ENCODE measurements at regions of chr6 and their contacts with region 1.

Region 1: DNA sequence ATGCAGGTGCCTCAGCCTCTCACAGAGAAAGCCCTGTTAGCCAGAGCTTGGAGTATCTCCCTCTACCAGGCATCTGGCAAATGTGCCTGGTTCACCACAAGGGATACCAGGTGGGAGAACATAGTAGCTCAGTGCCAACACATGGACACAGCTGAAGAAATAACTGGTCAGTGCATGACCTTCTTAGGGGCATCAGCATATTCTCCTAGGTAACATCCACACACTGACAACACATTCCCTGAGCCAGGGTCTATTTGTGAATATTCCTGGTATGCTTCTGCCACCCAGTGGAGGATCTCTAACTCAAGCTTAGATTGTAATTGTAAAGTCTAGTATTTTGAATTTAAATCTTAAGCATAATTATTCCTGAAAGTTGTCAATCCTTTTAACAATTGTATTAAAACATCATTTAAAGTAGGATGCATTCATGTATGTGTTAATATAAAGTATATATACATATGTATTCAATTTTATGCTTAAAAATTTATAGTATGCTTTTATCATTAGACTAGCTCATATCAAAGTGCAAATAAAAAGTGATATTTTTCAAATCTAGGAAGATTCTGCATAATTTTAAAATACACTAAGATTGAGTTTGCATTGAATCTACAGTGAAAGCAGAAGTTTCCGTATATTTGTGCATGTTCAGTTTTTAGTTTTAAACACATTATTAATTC is 45.3 kb upstream of the COL21A1 start:
- DNase-seq: peak; percentile 55
- H3K27ac ChIP-seq: no peak overlapping the region
- CTCF ChIP-seq: peak; percentile 59

Region 2: GRCh38 chr6:55983861-55984260 is 308.8 kb before region 1 on chr6:
- CTCF ChIA-PET with region 1: interaction called, 22 read pairs
- POLR2A ChIA-PET with region 1: no interaction called
- DNase-seq: no peak
- H3K27ac ChIP-seq: no peak overlapping the region
- CTCF ChIP-seq: no peak

Measured in RWPE1 (cell line).